ENCODE measurements at regions of chr5 and their contacts with region 1.

Region 1: GRCh38 chr5:148730943-148731861 is 76.9 kb upstream of the HTR4 start:
- DNase-seq: peak; percentile 85
- ATAC-seq: peak; percentile 94
- H3K4me3 Mint-ChIP-seq: no peak overlapping the region
- H3K27ac Mint-ChIP-seq: no peak overlapping the region
- H3K4me1 Mint-ChIP-seq: peaks cover 7% of the 10 kb centered on the region
- H3K27me3 Mint-ChIP-seq: peaks cover 1% of the 10 kb centered on the region

Region 2: DNA sequence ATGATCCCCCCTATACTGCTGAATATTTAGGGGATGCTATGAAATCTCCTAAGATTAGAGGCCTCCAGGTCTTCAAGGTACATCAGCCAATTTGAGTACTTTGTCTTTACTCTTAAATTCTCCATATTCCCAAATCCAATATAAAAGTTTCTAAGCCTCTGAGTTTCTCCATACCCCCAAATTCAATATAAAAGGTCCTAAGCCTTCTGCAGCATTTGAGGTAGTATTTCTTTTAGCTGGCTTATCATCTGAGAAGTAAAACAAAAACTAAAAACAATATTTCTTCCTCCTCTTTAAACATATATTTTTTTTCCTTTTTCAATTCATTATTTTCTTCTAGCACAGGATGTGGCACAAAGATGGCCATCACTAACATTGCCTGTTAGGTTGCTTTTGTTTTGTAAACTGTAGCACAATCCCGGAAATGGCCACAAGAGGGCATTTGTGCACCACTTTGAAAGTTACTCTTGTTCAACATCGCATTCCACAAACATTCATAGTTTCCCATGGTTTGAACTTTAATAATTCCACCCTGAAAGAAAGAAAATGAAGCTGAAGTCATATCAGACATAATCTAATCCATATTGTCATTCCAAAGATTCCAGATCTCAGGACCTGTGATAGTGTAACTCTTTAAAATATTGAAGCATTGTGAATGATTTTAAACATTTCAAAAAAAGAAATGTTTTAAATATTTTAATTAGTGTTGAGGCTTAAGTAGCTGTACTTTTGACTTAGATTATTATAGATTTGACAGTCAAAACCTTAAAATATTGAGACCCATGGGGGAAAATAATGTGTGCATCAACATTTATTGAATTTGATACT is 873.7 kb before region 1 on chr5:
- CTCF ChIA-PET with region 1: interaction called, 6 read pairs
- POLR2A ChIA-PET with region 1: no interaction called
- intact Hi-C with region 1: loop called in 1 of 2 experiments (anchors 5 kb)
- DNase-seq: peak; percentile 68
- ATAC-seq: peak; percentile 71
- H3K4me3 Mint-ChIP-seq: no peak overlapping the region
- H3K27ac Mint-ChIP-seq: no peak overlapping the region
- H3K4me1 Mint-ChIP-seq: no peaks in the 10 kb centered on the region
- H3K27me3 Mint-ChIP-seq: peaks cover 9% of the 10 kb centered on the region

Region 3: GRCh38 chr5:148179234-148179824 is 551.9 kb before region 1 on chr5:
- CTCF ChIA-PET with region 1: interaction called, 43 read pairs
- POLR2A ChIA-PET with region 1: no interaction called
- intact Hi-C with region 1: loop called (anchors 1 kb)
- DNase-seq: no peak
- ATAC-seq: peak; percentile 53
- H3K4me3 Mint-ChIP-seq: no peak overlapping the region
- H3K27ac Mint-ChIP-seq: no peak overlapping the region
- H3K4me1 Mint-ChIP-seq: no peaks in the 10 kb centered on the region
- H3K27me3 Mint-ChIP-seq: peaks cover 17% of the 10 kb centered on the region

Region 4: DNA sequence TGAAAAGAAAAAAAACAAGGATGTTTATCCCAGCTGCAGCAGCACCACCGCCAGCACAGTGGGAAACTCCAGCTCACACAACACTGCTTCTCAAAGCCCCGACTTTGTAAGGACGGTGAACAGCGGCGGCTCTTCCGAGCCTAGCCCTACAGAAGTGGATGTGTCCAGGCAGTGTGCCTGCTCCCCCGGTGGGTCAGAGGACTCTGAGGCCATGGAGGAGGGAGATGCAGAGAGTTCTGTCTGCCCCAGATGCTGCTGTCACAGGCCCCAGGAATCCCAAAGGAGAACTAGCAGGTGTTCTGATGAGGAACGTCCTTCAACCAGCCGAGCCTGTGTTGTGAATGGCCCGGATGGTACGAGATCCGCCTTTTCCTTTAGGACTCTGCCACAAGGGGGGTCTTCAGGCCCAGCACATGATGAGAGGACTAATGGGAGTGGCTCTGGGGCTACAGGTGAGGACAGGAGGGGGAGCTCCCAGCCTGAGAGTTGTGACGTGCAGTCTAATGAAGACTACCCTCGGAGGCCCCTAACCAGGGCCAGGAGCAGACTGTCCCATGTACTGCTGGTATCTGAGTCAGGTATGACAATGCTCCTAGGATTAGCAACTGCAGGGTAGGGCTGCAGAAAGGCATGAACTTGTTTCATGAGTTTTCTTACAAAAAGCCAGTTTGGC is 303.7 kb before region 1 on chr5:
- CTCF ChIA-PET with region 1: interaction called, 12 read pairs
- POLR2A ChIA-PET with region 1: no interaction called
- intact Hi-C with region 1: no loop called
- DNase-seq: no peak
- ATAC-seq: no peak
- H3K4me3 Mint-ChIP-seq: no peak overlapping the region
- H3K27ac Mint-ChIP-seq: no peak overlapping the region
- H3K4me1 Mint-ChIP-seq: peaks cover 13% of the 10 kb centered on the region
- H3K27me3 Mint-ChIP-seq: no peaks in the 10 kb centered on the region

Region 5: DNA sequence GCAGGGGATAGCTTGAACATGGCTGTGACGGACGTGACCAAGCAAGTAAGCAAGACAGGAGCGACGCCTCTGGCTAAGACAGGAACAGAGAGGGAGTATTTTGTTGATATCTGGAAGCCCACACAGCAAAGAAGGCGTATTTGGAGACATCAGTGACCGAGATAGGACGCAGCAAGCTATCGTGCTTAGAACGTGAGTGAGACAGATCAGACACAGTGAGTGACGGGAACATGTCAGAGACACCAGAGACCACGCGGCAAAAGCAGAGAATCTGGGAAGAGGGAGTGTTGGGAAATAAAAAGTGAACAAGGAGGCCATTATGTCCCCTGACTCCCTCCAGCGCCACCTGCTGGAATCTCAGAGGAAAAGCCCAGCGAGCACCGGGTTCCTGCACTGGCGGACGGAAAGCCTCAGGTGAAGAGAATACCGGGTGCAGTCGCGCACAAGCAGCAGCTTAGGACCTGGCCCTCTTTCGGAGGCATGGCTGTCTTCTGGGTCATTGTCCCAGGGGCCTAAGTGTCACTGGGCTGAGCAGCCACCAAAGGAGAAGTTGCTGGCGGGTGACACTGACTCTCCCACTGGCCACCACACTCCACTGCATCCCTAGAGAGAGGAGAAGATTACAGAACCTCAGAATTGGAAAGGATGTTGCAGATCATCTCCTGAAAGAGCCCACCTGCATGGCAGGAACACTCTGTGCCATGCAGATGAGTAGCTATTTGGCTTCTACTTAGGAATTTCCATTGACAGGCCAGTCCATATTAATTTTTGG is 248.3 kb before region 1 on chr5:
- CTCF ChIA-PET with region 1: interaction called, 19 read pairs
- POLR2A ChIA-PET with region 1: no interaction called
- intact Hi-C with region 1: loop called in 1 of 2 experiments (anchors 2 kb)
- DNase-seq: peak; percentile 85
- ATAC-seq: peak; percentile 88
- H3K4me3 Mint-ChIP-seq: no peak overlapping the region
- H3K27ac Mint-ChIP-seq: no peak overlapping the region
- H3K4me1 Mint-ChIP-seq: peaks cover 5% of the 10 kb centered on the region
- H3K27me3 Mint-ChIP-seq: peaks cover 33% of the 10 kb centered on the region

Region 6: GRCh38 chr5:148719605-148720004 is 11.6 kb before region 1 on chr5:
- CTCF ChIA-PET with region 1: interaction called, 27 read pairs
- POLR2A ChIA-PET with region 1: no interaction called
- intact Hi-C with region 1: no loop called
- DNase-seq: no peak
- ATAC-seq: no peak
- H3K4me3 Mint-ChIP-seq: no peak overlapping the region
- H3K27ac Mint-ChIP-seq: no peak overlapping the region
- H3K4me1 Mint-ChIP-seq: peaks cover 5% of the 10 kb centered on the region
- H3K27me3 Mint-ChIP-seq: peaks cover 38% of the 10 kb centered on the region

Region 7: DNA sequence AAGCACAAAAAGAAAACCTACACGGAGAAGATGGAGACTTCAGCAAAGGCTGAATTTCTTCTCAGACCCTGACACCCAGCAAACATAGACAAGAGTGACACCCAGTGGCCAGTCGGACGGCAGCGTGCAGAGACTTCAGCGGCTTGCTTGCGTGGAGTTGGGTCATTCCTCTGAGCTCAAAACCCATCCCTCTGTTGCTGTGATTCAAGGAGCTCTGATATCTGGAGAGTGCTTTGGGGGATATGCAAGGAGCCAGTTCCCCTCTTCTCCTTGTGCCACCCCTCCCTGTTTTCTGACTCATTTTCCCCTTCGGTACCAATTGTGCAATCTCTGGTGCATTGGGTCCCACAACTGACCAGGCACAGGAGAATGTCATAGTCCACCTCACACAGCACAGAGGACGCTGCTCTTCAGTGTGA is 304.2 kb after region 1 on chr5:
- CTCF ChIA-PET with region 1: interaction called, 356 read pairs
- POLR2A ChIA-PET with region 1: no interaction called
- intact Hi-C with region 1: loop called (anchors 1 kb)
- DNase-seq: peak; percentile 86
- ATAC-seq: peak; percentile 85
- H3K4me3 Mint-ChIP-seq: no peak overlapping the region
- H3K27ac Mint-ChIP-seq: no peak overlapping the region
- H3K4me1 Mint-ChIP-seq: peaks cover 18% of the 10 kb centered on the region
- H3K27me3 Mint-ChIP-seq: peaks cover 2% of the 10 kb centered on the region

Measured in activated CD4-positive, alpha-beta T cell treated with anti-CD3 and anti-CD28 coated beads for 36 hours (primary cell).